ENCODE measurements at regions of chr11 and their contacts with region 1.

Region 1: DNA sequence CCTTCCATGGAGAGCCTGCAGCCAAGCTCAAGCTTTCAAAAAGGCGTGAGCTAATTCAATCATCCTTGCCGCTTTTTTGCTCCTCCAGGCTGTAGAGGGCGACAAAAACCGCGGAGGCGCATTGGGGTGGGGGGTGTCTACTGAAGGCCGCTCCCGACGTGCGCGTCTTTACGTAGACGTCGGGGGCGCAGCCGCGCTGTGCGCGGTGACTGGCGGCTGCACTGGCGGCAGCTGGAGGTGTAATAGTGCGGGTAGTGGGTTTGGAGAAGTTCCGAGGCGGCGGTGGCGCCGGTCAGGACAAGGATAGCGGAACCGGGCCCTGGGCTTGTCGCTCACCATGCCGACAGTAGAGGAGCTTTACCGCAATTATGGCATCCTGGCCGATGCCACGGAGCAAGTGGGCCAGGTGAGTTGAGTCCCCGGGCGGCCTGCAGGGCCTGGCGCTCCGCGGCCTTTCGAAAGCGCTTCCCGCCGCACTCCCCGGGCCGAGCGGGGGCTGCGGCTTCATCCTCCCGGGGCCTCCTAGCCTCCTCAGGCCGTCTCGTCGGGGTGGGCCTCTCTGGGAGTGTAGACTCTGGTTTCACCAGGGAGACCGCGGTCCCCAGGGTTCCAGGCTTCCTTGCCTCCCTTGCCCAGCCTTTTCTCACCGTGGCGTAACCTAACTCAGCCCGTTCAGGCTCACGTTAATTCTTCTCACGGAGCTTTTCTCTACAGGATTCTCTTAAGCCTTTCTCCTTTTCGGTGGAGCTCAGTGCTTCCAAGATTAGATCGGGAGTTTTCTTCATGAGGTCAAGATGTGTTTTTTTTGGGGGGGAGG is at the start of gene API5:
- DNase-seq: peak; percentile 97
- H3K4me3 ChIP-seq: peak within 1 kb of the TSS; percentile 60 to 89 (median 78)
- H3K27ac ChIP-seq: peak within 1 kb of the TSS; percentile 81 to 88 (median 86)
- H3K4me1 ChIP-seq: peaks cover 15 to 46% (median 33%) of the 10 kb centered on the region in 4 donors
- H3K27me3 ChIP-seq: no peaks in the 10 kb centered on the region
- CTCF ChIP-seq: peak; percentile 75 to 85 (median 84)
- EP300 ChIP-seq: no peak
- POLR2A ChIP-seq: peak; percentile 42
- total RNA-seq, gene API5: 84.4 to 105 (median 91.9) TPM

Region 2: GRCh38 chr11:43358801-43359421 is 46.9 kb after region 1 on chr11 and contains the start of gene TTC17:
- intact Hi-C with region 1: loop called (anchors 5 kb)
- DNase-seq: peak; percentile 96
- H3K4me3 ChIP-seq: peak within 1 kb of the TSS; percentile 68 to 100 (median 85)
- H3K27ac ChIP-seq: peak within 1 kb of the TSS; percentile 82 to 91 (median 86)
- H3K4me1 ChIP-seq: peaks cover 13 to 44% (median 39%) of the 10 kb centered on the region in 4 donors
- H3K27me3 ChIP-seq: no peaks in the 10 kb centered on the region
- CTCF ChIP-seq: no peak
- EP300 ChIP-seq: no peak
- POLR2A ChIP-seq: peak; percentile 56
- total RNA-seq, gene TTC17: 45.3 to 73.5 (median 56.1) TPM

Region 3: GRCh38 chr11:43532041-43532440 is 220.0 kb after region 1 on chr11:
- intact Hi-C with region 1: no loop called
- DNase-seq: no peak
- H3K4me3 ChIP-seq: no peak overlapping the region
- H3K27ac ChIP-seq: no peak overlapping the region
- H3K4me1 ChIP-seq: no peaks in the 10 kb centered on the region
- H3K27me3 ChIP-seq: peaks cover 0 to 5% (median 0%) of the 10 kb centered on the region in 4 donors
- CTCF ChIP-seq: no peak
- EP300 ChIP-seq: no peak
- POLR2A ChIP-seq: no peak

Region 4: GRCh38 chr11:43687120-43687791 is 375.3 kb after region 1 on chr11:
- intact Hi-C with region 1: no loop called
- DNase-seq: no peak
- H3K4me3 ChIP-seq: no peak overlapping the region
- H3K27ac ChIP-seq: peak overlapping the region; percentile 38 to 47 (median 42)
- H3K4me1 ChIP-seq: peaks cover 12 to 43% (median 24%) of the 10 kb centered on the region in 4 donors
- H3K27me3 ChIP-seq: no peaks in the 10 kb centered on the region
- CTCF ChIP-seq: no peak
- EP300 ChIP-seq: no peak
- POLR2A ChIP-seq: no peak